MCF 10A (cell line): ENCODE measurements at regions of chr5 and their contacts with region 1.

Region 1: GRCh38 chr5:173315495-173316350 is 12.5 kb downstream of the STC2 start:
- DNase-seq: peak; percentile 43
- H3K4me3 Mint-ChIP-seq: no peak overlapping the region
- H3K27ac Mint-ChIP-seq: peak overlapping the region; percentile 10
- H3K4me1 Mint-ChIP-seq: peaks cover 17% of the 10 kb centered on the region
- H3K27me3 Mint-ChIP-seq: no peaks in the 10 kb centered on the region
- CTCF ChIP-seq: no peak

Region 2: GRCh38 chr5:173302547-173303066 is 13.1 kb before region 1 on chr5:
- CTCF ChIA-PET with region 1: interaction called, 10 read pairs
- POLR2A ChIA-PET with region 1: interaction called, 8 read pairs
- intact Hi-C with region 1: no loop called
- DNase-seq: peak; percentile 95
- H3K4me3 Mint-ChIP-seq: peak overlapping the region; percentile 33
- H3K27ac Mint-ChIP-seq: peak overlapping the region; percentile 61
- H3K4me1 Mint-ChIP-seq: peaks cover 29% of the 10 kb centered on the region
- H3K27me3 Mint-ChIP-seq: no peaks in the 10 kb centered on the region
- CTCF ChIP-seq: no peak